CD4-positive, alpha-beta memory T cell (primary cell): ENCODE measurements at regions of chr3 and their contacts with region 1.

Region 1: DNA sequence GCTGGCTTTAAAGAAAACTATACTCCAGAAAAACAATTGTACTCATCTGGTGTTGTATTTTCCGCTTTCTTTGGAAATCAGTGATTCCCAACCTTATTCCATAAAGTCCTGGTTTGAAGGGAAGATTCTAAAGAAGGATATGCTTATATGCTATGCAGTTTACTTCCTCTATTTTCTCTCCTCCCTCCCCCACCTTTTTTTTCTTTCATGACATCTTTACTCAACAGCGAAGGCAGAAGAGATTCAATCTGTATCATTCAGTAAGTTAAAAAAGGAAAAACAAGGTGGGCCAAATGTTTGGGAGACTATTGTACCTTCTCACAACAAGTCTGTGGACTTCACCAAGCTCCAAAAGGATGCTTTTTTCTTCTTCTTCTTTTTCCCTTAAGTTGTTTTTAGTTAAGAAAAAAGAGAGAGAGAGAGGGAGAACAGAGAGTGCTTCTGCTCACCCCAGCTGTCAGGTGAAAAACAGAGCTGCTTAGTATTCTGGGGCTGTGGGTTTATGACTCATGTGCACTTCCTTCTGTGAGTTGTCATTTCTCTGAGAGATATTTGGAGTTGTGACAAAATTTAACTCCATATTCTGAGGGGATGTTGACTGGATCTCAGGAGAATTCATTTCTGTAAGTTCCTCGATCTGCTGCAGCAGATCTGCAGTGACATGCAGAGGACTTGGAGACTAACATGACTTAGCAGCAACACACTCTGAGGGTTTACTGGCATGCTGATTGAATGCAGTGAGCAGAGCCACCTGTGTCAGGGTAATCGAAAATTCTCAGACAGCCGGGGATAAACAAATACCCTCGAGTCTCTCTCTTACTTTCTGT is 70.7 kb downstream of the SSR3 start:
- DNase-seq: peak; percentile 55 to 81 (median 64)
- H3K4me3 ChIP-seq: peak overlapping the region; percentile 42 to 55
- H3K4me3 Mint-ChIP-seq: peak overlapping the region; percentile 21 to 87 (median 77)
- H3K27ac ChIP-seq: peak overlapping the region; percentile 63
- H3K27ac Mint-ChIP-seq: peak overlapping the region; percentile 77 to 94 (median 92)
- H3K4me1 ChIP-seq: peaks cover 43% of the 10 kb centered on the region
- H3K4me1 Mint-ChIP-seq: peaks cover 32 to 52% (median 39%) of the 10 kb centered on the region in 4 donors
- H3K27me3 ChIP-seq: no peaks in the 10 kb centered on the region
- H3K27me3 Mint-ChIP-seq: no peaks in the 10 kb centered on the region

Region 2: DNA sequence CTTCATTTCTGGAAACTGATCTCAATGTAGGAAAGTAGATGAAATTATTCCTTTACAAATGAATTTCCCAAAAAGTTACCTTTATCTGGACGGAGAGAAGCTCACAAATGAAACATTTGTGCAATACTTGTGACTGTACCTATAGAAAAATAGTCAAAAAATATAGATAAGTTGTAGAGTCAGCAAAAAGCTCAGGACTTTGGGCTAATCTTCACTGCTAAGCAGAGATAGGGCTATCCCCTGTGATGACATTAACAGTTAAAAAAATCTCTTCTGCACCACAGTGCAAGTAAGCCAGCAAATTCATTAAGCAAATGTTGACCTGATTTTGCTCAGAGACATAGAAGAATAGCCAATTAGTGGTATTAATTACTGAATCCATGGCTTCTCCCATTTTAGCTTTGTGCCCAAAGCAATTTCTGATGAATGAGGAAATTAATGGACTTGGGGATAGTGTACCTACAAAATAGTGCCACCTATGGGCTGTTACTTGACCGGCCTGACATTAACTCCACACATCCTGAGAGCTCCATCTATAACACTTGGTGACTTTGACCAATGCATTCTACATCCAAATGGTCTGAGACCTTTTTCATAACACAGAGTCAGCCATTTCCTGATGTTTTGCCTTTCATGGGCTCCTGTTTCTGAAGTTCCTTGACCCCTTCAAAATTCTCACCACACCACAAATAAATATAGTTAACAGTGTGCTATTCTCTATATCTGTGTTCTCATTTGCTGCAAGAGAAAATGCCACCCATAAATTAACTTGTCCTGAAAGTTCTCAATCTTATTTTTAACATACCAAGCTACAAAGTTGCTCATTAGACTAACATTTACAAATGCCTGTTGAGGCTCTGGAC is 34.2 kb before region 1 on chr3:
- CTCF ChIA-PET with region 1: interaction called, 17 read pairs
- POLR2A ChIA-PET with region 1: interaction called, 4 read pairs
- intact Hi-C with region 1: no loop called
- DNase-seq: peak in 1 of 5 donors; percentile 10
- H3K4me3 ChIP-seq: no peak overlapping the region
- H3K4me3 Mint-ChIP-seq: no peak overlapping the region
- H3K27ac ChIP-seq: no peak overlapping the region
- H3K27ac Mint-ChIP-seq: no peak overlapping the region
- H3K4me1 ChIP-seq: no peaks in the 10 kb centered on the region
- H3K4me1 Mint-ChIP-seq: no peaks in the 10 kb centered on the region
- H3K27me3 ChIP-seq: no peaks in the 10 kb centered on the region
- H3K27me3 Mint-ChIP-seq: peaks cover 2 to 4% of the 10 kb centered on the region in 2 donors

Region 3: DNA sequence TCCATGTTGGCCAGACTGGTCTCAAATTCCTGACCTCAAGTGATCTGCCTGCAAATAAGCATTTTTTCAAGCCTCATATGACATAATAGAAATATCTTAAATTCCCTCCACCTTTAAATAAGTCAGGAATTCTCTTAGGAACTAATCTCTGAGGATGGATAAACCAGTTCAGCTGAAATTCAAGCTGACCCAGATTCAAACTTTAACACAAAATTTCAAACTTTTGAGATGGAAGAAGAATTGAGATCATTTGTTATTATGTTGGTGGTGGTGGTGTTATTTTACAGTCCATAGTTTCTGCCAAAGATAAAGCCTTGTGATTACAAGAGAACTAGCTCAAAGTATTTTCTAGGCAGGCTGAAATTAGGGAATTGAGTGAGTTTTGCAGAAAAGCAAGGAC is 14.7 kb before region 1 on chr3:
- CTCF ChIA-PET with region 1: interaction called, 9 read pairs
- POLR2A ChIA-PET with region 1: interaction called, 13 read pairs
- intact Hi-C with region 1: no loop called
- DNase-seq: no peak
- H3K4me3 ChIP-seq: no peak overlapping the region
- H3K4me3 Mint-ChIP-seq: no peak overlapping the region
- H3K27ac ChIP-seq: no peak overlapping the region
- H3K27ac Mint-ChIP-seq: no peak overlapping the region
- H3K4me1 ChIP-seq: no peaks in the 10 kb centered on the region
- H3K4me1 Mint-ChIP-seq: no peaks in the 10 kb centered on the region
- H3K27me3 ChIP-seq: no peaks in the 10 kb centered on the region
- H3K27me3 Mint-ChIP-seq: peaks cover 5 to 12% of the 10 kb centered on the region in 2 donors

Region 4: DNA sequence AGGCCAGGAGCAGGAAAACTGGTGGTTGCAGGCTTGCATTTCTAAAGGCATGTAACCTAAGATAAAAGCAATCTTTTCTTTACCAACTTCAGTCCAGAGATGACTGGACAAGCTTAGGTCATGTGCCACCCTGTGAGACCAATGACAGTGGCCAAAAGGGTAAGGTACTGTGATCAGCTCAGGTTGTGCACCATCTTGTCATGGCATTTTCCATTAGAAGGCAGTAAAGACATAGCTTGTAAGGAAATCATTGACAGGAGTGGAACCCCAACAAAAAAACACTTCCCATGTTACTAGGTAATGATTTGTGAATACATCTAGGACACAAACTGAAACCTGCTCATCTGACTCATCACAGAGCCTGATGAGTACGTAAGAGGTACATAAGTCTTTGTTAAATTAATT is 35.6 kb after region 1 on chr3:
- CTCF ChIA-PET with region 1: interaction called, 4 read pairs
- POLR2A ChIA-PET with region 1: interaction called, 10 read pairs
- intact Hi-C with region 1: loop called (anchors 5 kb)
- DNase-seq: no peak
- H3K4me3 ChIP-seq: no peak overlapping the region
- H3K4me3 Mint-ChIP-seq: no peak overlapping the region
- H3K27ac ChIP-seq: no peak overlapping the region
- H3K27ac Mint-ChIP-seq: no peak overlapping the region
- H3K4me1 ChIP-seq: peaks cover 2% of the 10 kb centered on the region
- H3K4me1 Mint-ChIP-seq: peaks cover 7 to 12% (median 10%) of the 10 kb centered on the region in 4 donors
- H3K27me3 ChIP-seq: no peaks in the 10 kb centered on the region
- H3K27me3 Mint-ChIP-seq: peaks cover 7 to 8% of the 10 kb centered on the region in 2 donors

Region 5: GRCh38 chr3:158109804-158110657 is 1625.9 kb after region 1 on chr3 and contains the start of gene RSRC1:
- CTCF ChIA-PET with region 1: no interaction called
- POLR2A ChIA-PET with region 1: no interaction called
- intact Hi-C with region 1: loop called (anchors 10 kb)
- DNase-seq: peak; percentile 75 to 84 (median 78)
- H3K4me3 ChIP-seq: peak within 1 kb of the TSS; percentile 59 to 82
- H3K4me3 Mint-ChIP-seq: peak within 1 kb of the TSS; percentile 84 to 100 (median 96)
- H3K27ac ChIP-seq: peak within 1 kb of the TSS; percentile 51
- H3K27ac Mint-ChIP-seq: peak within 1 kb of the TSS; percentile 74 to 98 (median 90)
- H3K4me1 ChIP-seq: peaks cover 50% of the 10 kb centered on the region
- H3K4me1 Mint-ChIP-seq: peaks cover 43 to 78% (median 52%) of the 10 kb centered on the region in 4 donors
- H3K27me3 ChIP-seq: peaks cover 38% of the 10 kb centered on the region
- H3K27me3 Mint-ChIP-seq: peaks cover 29 to 30% of the 10 kb centered on the region in 2 donors
- total RNA-seq, gene RSRC1: 34.1 to 35.7 TPM